ENCODE measurements at regions of chr13 and their contacts with region 1.

Region 1: DNA sequence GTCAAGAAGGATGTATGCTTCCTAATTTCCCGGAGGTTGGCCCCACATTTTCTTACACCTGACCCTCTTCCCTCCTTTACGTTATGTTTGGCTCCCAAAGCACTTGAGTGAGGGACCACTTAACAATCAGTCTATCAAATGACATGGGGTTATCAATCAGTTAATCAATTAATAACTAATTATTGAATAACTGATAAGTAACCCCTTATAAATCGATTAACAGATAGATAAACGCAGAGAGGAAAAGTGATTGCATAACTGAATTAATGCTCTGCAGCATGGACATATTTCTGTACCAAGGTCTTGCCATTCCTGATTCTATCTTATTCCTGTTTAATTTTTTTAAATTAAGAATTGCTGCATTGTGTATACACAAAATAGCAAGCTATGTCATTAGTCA is 1022.9 kb downstream of the OLFM4 start:
- DNase-seq: no peak
- H3K4me3 ChIP-seq: no peak overlapping the region
- H3K27ac ChIP-seq: no peak overlapping the region
- H3K4me1 ChIP-seq: no peaks in the 10 kb centered on the region
- H3K27me3 ChIP-seq: no peaks in the 10 kb centered on the region
- CTCF ChIP-seq: no peak
- POLR2A ChIP-seq: no peak

Region 2: GRCh38 chr13:53445686-53446085 is 605.8 kb before region 1 on chr13:
- intact Hi-C with region 1: no loop called
- DNase-seq: no peak
- H3K4me3 ChIP-seq: no peak overlapping the region
- H3K27ac ChIP-seq: no peak overlapping the region
- H3K4me1 ChIP-seq: no peaks in the 10 kb centered on the region
- H3K27me3 ChIP-seq: no peaks in the 10 kb centered on the region
- CTCF ChIP-seq: no peak
- POLR2A ChIP-seq: no peak

Region 3: DNA sequence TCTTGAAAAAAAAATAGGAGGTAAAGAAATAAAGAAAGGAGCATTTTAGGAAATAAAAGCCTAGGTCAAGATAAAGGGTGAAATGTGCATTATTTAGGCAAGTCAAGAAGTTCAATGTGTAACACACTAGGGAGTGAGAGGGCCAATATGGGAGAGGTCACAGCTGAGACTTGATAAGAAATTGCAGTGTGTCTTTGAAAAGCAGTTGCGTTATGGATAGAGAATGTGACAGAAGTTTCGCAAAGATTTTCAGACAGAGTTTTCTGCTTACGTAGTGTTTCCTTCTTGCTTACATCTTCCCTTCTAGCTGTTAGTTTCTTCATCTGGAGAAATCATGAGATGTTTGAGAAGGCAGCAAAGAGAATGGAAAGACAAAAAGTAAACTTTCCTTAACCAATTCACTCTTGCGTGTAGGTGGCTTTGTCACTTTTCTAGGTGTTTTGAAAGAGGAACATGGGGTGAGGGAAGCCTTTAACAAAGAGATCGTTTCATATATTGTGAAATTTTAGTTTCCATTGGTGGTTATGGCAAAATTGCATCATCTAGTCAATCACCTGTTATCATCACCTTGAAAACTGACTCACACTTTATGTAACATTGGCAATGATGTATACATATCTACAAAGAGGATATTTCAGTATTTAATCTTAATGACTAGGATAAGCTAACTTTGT is 47.4 kb before region 1 on chr13:
- intact Hi-C with region 1: loop called (anchors 10 kb)
- DNase-seq: no peak
- H3K4me3 ChIP-seq: no peak overlapping the region
- H3K27ac ChIP-seq: no peak overlapping the region
- H3K4me1 ChIP-seq: no peaks in the 10 kb centered on the region
- H3K27me3 ChIP-seq: no peaks in the 10 kb centered on the region
- CTCF ChIP-seq: no peak
- POLR2A ChIP-seq: no peak

Measured in spleen (tissue), 13 donors.